ENCODE measurements at regions of chr7 and their contacts with region 1.

Region 1: GRCh38 chr7:131619336-131620305 is 63.2 kb upstream of the PODXL start:
- DNase-seq: no peak

Region 2: DNA sequence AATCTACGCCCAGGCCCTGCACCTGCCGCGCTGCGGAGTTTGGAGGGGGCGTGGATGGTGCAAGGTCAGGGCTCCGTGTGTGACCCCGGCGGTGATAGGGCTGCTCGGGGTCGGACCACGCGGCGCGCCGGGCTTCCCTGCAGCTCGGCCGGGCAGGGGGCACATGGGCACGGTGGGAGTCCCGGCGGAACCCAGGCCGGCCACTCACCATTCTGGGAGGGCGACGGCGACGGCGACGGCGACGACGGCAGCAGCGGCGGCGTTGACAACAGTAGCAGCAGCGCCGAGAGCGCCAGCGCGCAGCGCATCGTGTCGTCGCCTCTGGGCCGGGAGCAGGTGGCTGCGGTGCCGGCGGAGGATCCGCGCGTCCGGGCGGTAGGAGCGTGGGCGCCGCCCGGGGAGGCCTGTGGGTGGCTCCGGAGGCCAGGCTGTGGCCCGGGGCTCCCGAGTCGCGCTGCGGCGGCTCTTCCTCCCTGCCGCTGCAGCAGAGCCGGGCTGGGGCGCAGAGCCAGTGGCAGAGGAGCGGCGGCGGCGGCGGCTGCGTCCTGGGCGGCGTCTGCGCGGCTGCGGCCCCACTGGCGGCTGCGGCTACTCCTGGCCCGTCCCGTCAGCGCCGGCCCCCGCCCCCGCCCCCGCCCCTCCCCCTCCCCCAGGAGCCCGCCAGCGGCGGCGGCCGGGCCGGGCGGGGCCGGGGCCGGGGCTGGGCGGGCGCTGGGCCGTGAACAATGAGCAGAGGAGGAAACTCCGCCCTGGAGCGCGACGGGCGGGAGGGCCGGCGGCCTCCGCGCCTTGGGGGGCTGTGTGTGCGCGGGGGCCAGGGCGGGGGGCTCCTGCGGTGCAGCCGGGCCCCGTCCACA is 63.3 kb before region 1 on chr7 and contains the start of gene PODXL:
- intact Hi-C with region 1: loop called (anchors 5 kb)
- DNase-seq: peak; percentile 82
- total RNA-seq, gene PODXL: 76.2 TPM

Region 3: DNA sequence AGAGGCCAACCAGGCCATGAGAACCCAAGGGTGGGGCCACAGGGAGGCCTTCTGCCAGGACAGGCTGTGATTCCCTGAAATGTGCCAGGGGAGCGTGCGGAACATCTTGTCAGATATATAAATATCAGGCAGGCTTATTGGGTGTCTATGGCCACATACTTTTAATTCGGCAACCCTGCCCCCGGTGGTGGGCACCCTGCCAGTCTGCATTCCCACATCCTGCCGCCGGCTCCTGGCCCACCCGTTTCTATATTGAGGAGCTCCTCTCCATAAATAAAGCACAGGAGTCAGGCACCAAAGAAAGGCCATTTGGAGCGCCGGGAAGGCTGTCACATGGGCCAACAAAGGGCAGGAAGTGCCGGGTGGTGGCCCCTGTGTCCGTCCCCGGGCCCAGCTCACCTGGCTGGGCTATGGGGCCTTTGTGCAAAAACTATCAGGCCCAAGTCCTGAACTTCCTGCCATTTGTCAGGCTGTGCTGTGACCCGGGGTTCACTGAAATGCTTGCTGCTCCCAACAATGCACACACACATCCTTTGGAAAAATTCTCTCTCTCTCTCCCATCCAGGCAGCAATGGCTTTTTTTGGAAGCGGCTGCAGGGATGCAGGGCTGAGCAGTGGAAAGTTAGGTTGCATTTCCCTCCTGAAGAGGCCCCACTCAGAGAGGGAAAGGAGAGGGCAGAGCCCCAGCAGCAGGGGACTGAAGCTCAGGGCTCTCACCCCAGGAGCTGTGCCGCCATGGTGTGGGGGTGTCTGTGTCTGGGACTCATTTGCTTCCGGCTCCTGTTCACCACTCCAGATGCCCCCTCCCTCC is 38.2 kb before region 1 on chr7:
- intact Hi-C with region 1: loop called (anchors 5 kb)
- DNase-seq: peak; percentile 93

Region 4: DNA sequence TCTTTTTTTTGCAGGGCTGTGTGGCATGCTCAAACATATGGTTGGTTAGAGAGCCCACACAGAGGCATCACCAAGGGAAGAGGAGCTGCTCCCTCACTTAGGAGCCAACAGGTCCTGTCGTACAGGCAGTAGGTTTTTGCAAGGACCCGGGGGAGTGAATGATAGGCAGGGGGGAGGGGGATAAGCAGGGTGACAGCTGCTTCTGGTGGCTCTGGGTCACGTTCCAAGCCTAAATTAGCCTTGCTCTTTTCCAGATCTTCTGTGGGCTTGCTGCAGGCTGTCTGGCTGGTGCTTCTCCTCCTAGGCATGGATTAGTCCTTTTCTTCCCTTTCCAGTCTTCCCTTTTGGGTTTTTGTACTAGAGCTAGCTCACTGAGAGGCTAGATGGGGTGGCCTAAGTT is 54.5 kb after region 1 on chr7:
- intact Hi-C with region 1: no loop called
- DNase-seq: no peak

Region 5: DNA sequence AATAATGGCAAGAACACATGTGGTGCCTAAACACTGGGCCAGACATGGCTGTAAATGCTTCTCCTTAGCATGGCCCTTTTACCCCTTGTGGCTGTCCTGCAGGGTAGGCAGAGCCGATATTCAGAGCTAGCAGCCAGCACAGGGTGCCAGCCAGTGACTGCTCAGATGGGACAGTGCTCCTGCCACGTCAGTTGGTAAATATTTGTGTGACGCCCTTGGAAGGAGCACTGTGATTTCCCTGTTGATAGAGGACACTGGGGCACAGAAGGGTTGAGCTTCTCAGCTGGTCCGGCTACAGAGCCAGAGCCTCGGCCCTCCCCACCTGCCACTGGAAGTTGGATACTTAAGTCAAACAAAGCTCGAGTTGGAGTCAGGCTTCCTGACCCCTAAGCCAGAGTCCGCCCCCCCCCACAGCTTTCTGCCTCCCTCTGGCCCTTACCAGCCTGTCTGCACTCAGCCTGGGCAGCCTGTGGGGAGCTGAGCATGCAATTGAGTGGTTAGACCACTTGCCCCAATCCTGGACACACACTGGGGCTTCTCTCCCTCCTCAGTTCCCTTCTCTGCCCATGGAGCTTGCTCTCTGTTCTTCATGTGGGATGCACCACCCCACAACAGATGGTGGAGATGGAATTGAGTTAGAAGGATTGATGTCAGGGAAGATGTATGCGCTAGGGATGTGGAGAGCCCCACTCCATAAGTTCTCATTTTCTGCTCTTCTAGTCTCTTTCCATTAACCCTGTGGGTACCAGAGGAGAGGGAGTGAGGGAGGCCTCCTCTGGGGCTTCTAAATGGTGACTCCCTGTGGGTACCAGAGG is 605.8 kb after region 1 on chr7:
- intact Hi-C with region 1: no loop called
- DNase-seq: peak; percentile 74